Vagina (tissue), 2 donors: ENCODE measurements at regions of chr18 and their contacts with region 1.

Region 1: GRCh38 chr18:61554117-61554776 is 221.0 kb downstream of the CDH20 start:
- DNase-seq: no peak
- H3K4me3 ChIP-seq: no peak overlapping the region
- H3K27ac ChIP-seq: no peak overlapping the region
- H3K4me1 ChIP-seq: no peaks in the 10 kb centered on the region
- H3K27me3 ChIP-seq: no peaks in the 10 kb centered on the region
- CTCF ChIP-seq: no peak
- POLR2A ChIP-seq: no peak

Region 2: GRCh38 chr18:61635901-61636528 is 81.8 kb after region 1 on chr18:
- intact Hi-C with region 1: loop called (anchors 2 kb)
- DNase-seq: no peak
- H3K4me3 ChIP-seq: no peak overlapping the region
- H3K27ac ChIP-seq: no peak overlapping the region
- H3K4me1 ChIP-seq: peaks cover 21% of the 10 kb centered on the region
- H3K27me3 ChIP-seq: no peaks in the 10 kb centered on the region
- CTCF ChIP-seq: peak in 2 of 3 experiments; percentile 17 to 68
- POLR2A ChIP-seq: no peak

Region 3: DNA sequence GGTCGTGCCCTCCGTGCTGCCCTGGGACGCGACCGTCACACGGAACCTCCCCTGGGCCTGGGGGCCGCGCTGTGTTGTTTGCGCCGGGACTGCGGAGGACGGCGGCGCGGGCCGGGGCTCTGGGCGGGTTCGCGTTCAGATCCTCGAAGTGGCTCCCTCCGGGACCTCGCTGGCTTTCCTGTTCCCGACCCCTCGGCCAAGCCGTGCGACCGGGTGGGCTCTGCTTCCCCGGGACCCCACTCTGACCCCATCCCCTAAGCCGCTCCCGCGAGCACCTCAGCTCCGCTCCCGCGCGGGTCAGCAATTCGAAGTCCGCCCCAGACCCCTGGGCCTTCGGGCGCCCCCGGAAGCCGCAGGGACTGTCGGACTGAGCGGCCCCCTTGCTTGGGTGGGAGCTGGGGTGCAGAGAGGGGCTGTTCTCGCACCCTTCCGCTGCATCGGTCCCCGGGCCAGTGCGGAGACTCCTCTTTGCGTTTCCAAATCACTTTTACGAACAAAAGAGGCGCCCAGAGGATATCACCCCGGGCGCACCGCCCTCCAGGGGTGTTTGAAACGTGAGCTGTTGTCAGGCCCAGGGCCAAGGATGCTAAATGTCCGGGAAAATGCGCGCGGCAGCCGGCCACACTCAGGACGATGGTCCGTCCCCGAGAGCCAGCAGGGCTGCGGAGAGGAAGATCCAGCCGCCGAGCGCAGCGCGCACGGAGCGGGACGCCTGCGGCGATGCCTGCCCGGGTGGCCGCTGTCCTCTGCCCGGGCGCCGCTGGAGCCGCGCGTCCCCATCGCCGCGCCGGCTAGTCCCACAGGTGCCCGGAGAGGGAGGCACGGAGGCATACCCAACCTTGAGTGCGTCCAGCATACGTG is 1042.1 kb after region 1 on chr18:
- intact Hi-C with region 1: no loop called
- DNase-seq: no peak
- H3K4me3 ChIP-seq: peak overlapping the region; percentile 28 to 46
- H3K27ac ChIP-seq: no peak overlapping the region
- H3K4me1 ChIP-seq: peaks cover 13% of the 10 kb centered on the region
- H3K27me3 ChIP-seq: peaks cover 5% of the 10 kb centered on the region
- CTCF ChIP-seq: no peak
- POLR2A ChIP-seq: no peak